Activated B cell treated with CpG ODN at 0.5 μM for 24 hours (primary cell): ENCODE measurements at regions of chr5 and their contacts with region 1.

Region 1: GRCh38 chr5:82278095-82278918 is at the start of gene RPS23:
- DNase-seq: peak; percentile 79
- ATAC-seq: peak; percentile 92
- H3K4me3 Mint-ChIP-seq: peak within 1 kb of the TSS; percentile 96
- H3K27ac Mint-ChIP-seq: peak within 1 kb of the TSS; percentile 99
- H3K4me1 Mint-ChIP-seq: peaks cover 44% of the 10 kb centered on the region
- H3K27me3 Mint-ChIP-seq: no peaks in the 10 kb centered on the region
- CTCF ChIP-seq: no peak
- total RNA-seq, gene RPS23: 4,125 and 4,753 TPM in 2 replicates

Region 2: DNA sequence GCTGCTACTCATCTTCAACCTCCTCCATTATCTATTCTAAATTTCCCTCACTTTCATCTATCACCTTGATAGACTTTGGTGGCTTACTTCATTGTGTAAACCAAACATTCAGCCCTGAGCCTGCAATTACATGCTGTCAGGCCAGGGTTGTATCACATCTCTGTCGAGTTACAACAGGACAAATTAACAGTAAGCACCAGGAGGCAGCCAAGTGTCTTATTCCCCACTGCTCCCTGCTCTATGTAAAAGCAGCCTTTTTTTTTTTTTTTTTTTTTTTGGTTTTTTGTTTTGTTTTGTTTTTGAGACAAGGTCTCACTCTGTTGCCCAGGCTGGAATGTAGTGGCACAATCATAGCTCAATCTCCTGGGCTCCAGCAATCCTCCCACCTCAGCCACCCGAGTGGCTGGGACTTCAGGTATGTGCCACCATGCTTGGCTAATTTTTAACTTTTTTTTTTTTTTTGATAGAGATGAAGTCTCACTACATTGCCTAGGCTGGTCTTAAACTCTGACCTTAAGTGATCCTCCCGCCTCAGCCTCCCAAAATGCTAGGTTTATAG is 992.2 kb before region 1 on chr5:
- CTCF ChIA-PET with region 1: no interaction called
- POLR2A ChIA-PET with region 1: interaction called, 11 read pairs
- intact Hi-C with region 1: no loop called
- DNase-seq: no peak
- ATAC-seq: no peak
- H3K4me3 Mint-ChIP-seq: no peak overlapping the region
- H3K27ac Mint-ChIP-seq: no peak overlapping the region
- H3K4me1 Mint-ChIP-seq: peaks cover 24% of the 10 kb centered on the region
- H3K27me3 Mint-ChIP-seq: no peaks in the 10 kb centered on the region
- CTCF ChIP-seq: no peak

Region 3: GRCh38 chr5:82147865-82148573 is 130.3 kb before region 1 on chr5:
- CTCF ChIA-PET with region 1: no interaction called
- POLR2A ChIA-PET with region 1: no interaction called
- intact Hi-C with region 1: no loop called
- DNase-seq: no peak
- ATAC-seq: no peak
- H3K4me3 Mint-ChIP-seq: no peak overlapping the region
- H3K27ac Mint-ChIP-seq: no peak overlapping the region
- H3K4me1 Mint-ChIP-seq: no peaks in the 10 kb centered on the region
- H3K27me3 Mint-ChIP-seq: no peaks in the 10 kb centered on the region
- CTCF ChIP-seq: no peak

Region 4: DNA sequence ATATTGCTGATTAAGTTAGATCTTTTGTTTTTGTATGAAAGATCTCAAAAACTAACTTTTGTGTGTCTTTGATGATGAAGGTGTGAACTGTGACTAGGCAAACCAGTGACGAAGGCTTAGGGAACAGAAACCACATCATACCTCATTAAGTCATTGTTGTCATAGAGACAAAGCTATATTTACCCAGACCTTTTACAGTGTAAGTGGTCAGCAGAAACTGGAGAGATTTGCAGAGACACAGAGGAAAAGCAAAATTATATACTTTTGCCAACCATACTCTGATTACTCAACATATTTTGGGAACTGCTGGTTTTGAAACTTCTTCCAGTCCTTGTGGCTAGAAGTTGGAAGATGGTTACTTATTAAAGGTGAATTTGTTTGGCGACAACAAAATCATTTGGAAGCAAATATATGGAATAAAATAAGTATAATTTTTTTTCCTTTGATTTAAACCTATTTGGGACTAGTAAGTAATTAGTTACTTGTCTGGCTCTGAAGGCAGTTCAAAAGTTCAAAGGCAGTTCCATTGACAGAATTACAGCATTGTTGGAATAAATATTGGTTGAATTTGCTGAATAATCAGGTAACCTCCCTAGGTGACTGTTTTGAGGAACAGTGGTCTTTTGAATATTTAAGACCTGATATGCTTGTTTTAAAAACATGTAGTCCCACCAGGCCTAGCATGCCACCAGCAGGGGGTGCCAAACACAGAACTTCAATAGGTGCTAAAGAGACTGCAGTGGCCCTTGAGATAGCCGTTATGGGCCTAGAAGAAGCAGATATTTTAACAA is 104.0 kb before region 1 on chr5:
- CTCF ChIA-PET with region 1: no interaction called
- POLR2A ChIA-PET with region 1: no interaction called
- intact Hi-C with region 1: loop called (anchors 1 kb)
- DNase-seq: peak; percentile 46
- ATAC-seq: peak; percentile 89
- H3K4me3 Mint-ChIP-seq: peak overlapping the region; percentile 12
- H3K27ac Mint-ChIP-seq: peak overlapping the region; percentile 69
- H3K4me1 Mint-ChIP-seq: peaks cover 20% of the 10 kb centered on the region
- H3K27me3 Mint-ChIP-seq: no peaks in the 10 kb centered on the region
- CTCF ChIP-seq: no peak

Region 5: GRCh38 chr5:82197550-82197949 is 80.8 kb before region 1 on chr5:
- CTCF ChIA-PET with region 1: no interaction called
- POLR2A ChIA-PET with region 1: no interaction called
- intact Hi-C with region 1: no loop called
- DNase-seq: no peak
- ATAC-seq: no peak
- H3K4me3 Mint-ChIP-seq: no peak overlapping the region
- H3K27ac Mint-ChIP-seq: no peak overlapping the region
- H3K4me1 Mint-ChIP-seq: no peaks in the 10 kb centered on the region
- H3K27me3 Mint-ChIP-seq: no peaks in the 10 kb centered on the region
- CTCF ChIP-seq: no peak

Region 6: DNA sequence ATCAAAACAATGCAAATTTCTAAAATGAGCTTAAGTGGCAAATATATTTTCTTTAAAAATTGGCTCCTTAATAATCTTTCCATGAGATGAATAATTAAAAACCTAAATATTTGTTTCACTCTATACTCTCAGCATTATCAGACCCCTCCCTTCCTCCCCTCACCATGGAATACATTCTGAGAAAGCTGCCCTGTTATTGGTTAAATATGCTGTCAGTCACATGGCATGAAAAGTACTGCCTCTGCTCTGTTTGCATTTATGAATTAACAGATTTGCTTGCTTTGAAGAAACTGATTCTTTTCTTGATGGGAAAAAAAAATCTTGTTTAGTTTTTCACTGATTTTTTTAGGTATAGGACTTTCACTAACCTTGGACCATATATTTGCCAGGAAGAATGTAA is 16.8 kb after region 1 on chr5:
- CTCF ChIA-PET with region 1: no interaction called
- POLR2A ChIA-PET with region 1: no interaction called
- intact Hi-C with region 1: no loop called
- DNase-seq: no peak
- ATAC-seq: no peak
- H3K4me3 Mint-ChIP-seq: no peak overlapping the region
- H3K27ac Mint-ChIP-seq: no peak overlapping the region
- H3K4me1 Mint-ChIP-seq: no peaks in the 10 kb centered on the region
- H3K27me3 Mint-ChIP-seq: no peaks in the 10 kb centered on the region
- CTCF ChIP-seq: no peak

Region 7: DNA sequence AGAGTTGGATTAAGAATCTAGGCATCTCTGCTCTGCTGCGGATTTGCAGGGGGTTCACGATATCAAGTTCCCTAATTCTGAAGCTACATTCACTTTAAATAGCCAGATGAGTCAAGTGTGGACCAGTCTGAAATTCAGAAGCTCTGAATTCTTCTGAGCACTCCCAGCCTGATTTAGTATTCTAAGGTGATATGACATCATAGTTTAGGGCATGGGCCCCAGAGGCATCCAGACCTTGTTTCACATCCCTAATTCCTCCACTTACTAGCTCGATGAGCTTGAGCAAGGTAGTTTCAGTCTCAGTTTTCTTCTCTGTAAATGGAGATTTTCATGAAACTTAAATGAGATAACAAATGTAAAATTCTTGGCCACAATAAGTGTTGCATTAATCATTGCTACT is 733.7 kb after region 1 on chr5:
- CTCF ChIA-PET with region 1: no interaction called
- POLR2A ChIA-PET with region 1: no interaction called
- intact Hi-C with region 1: loop called (anchors 5 kb)
- DNase-seq: no peak
- ATAC-seq: peak; percentile 97
- H3K4me3 Mint-ChIP-seq: peak overlapping the region; percentile 56
- H3K27ac Mint-ChIP-seq: peak overlapping the region; percentile 68
- H3K4me1 Mint-ChIP-seq: peaks cover 18% of the 10 kb centered on the region
- H3K27me3 Mint-ChIP-seq: no peaks in the 10 kb centered on the region
- CTCF ChIP-seq: no peak